ENCODE measurements at regions of chr3 and their contacts with region 1.

Region 1: GRCh38 chr3:111539351-111540331 is 2.4 kb upstream of the CD96 start:
- DNase-seq: peak; percentile 37 to 82 (median 64)
- ATAC-seq: peak; percentile 26
- H3K4me3 ChIP-seq: peak overlapping the region; percentile 37
- H3K4me3 Mint-ChIP-seq: peak overlapping the region; percentile 64
- H3K27ac ChIP-seq: peak overlapping the region in 1 of 2 donors; percentile 10
- H3K27ac Mint-ChIP-seq: no peak overlapping the region
- H3K4me1 ChIP-seq: peaks cover 31% of the 10 kb centered on the region
- H3K4me1 Mint-ChIP-seq: peaks cover 46% of the 10 kb centered on the region
- H3K27me3 ChIP-seq: no peaks in the 10 kb centered on the region
- H3K27me3 Mint-ChIP-seq: no peaks in the 10 kb centered on the region
- CTCF ChIP-seq: peak; percentile 96

Region 2: GRCh38 chr3:109731620-109732473 is 1807.8 kb before region 1 on chr3:
- CTCF ChIA-PET with region 1: no interaction called
- POLR2A ChIA-PET with region 1: no interaction called
- intact Hi-C with region 1: loop called (anchors 1 to 2 kb)
- DNase-seq: peak; percentile 0 to 78 (median 50)
- ATAC-seq: peak; percentile 88
- H3K4me3 ChIP-seq: no peak overlapping the region
- H3K4me3 Mint-ChIP-seq: no peak overlapping the region
- H3K27ac ChIP-seq: no peak overlapping the region
- H3K27ac Mint-ChIP-seq: no peak overlapping the region
- H3K4me1 ChIP-seq: peaks cover 2% of the 10 kb centered on the region
- H3K4me1 Mint-ChIP-seq: peaks cover 13% of the 10 kb centered on the region
- H3K27me3 ChIP-seq: no peaks in the 10 kb centered on the region
- H3K27me3 Mint-ChIP-seq: no peaks in the 10 kb centered on the region
- CTCF ChIP-seq: peak; percentile 90

Region 3: DNA sequence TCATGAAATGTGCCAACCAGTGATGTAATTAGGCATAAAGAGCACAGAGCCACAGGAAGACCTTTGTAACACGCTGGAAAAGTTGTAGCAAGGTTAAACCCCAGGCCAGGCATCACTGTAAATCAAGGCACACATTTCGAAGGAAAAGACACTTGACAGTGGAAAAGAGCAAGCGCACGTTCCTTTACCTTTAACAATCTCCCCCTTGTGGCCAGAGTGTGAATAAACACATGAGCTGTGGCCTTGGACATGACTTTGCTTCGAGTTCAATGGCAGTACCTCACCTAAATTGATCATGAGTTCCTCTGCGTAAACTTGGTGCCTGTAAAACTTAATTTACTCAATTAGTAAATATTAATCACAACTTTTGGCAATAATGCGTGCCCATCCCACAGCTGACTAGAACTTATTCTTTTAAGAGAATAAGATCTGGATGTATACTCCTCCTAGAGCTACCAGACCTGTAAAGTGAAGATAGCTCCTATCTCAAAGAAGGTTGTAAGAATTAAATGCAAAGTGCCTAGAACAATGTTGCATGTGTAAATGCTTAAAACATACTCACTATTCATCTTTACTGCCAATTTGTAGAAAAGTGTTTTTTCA is 1225.0 kb before region 1 on chr3:
- CTCF ChIA-PET with region 1: interaction called, 9 read pairs
- POLR2A ChIA-PET with region 1: interaction called, 3 read pairs
- intact Hi-C with region 1: loop called (anchors 5 to 10 kb)
- DNase-seq: peak; percentile 7 to 75 (median 40)
- ATAC-seq: peak; percentile 63
- H3K4me3 ChIP-seq: no peak overlapping the region
- H3K4me3 Mint-ChIP-seq: no peak overlapping the region
- H3K27ac ChIP-seq: no peak overlapping the region
- H3K27ac Mint-ChIP-seq: no peak overlapping the region
- H3K4me1 ChIP-seq: peaks cover 3% of the 10 kb centered on the region
- H3K4me1 Mint-ChIP-seq: no peaks in the 10 kb centered on the region
- H3K27me3 ChIP-seq: no peaks in the 10 kb centered on the region
- H3K27me3 Mint-ChIP-seq: no peaks in the 10 kb centered on the region
- CTCF ChIP-seq: peak; percentile 77

Region 4: DNA sequence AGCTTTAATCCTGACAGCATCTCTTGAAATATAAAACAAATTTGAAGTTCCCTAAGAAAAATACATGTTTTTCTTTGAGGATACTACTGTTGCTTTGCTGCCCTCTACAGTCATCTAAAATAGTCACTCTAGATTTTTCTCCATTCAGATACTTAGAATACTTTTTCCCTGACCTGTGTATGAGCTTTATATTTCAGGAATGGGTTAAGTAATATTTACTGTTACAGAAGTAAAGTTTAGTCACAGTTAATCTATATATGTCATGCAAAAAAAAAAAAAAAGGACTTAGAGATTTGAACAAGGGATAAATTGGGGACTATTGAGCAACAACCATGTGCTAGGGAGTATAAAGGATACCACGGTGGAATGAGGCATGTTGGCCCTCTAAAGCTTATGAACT is 459.2 kb before region 1 on chr3:
- CTCF ChIA-PET with region 1: interaction called, 4 read pairs
- POLR2A ChIA-PET with region 1: no interaction called
- intact Hi-C with region 1: loop called in 1 of 2 experiments (anchors 5 kb)
- DNase-seq: peak in 3 of 14 experiments; percentile 34 to 36 (median 35)
- ATAC-seq: no peak
- H3K4me3 ChIP-seq: no peak overlapping the region
- H3K4me3 Mint-ChIP-seq: no peak overlapping the region
- H3K27ac ChIP-seq: no peak overlapping the region
- H3K27ac Mint-ChIP-seq: no peak overlapping the region
- H3K4me1 ChIP-seq: no peaks in the 10 kb centered on the region
- H3K4me1 Mint-ChIP-seq: peaks cover under 1% of the 10 kb centered on the region
- H3K27me3 ChIP-seq: no peaks in the 10 kb centered on the region
- H3K27me3 Mint-ChIP-seq: peaks cover 15% of the 10 kb centered on the region
- CTCF ChIP-seq: peak; percentile 72

Region 5: DNA sequence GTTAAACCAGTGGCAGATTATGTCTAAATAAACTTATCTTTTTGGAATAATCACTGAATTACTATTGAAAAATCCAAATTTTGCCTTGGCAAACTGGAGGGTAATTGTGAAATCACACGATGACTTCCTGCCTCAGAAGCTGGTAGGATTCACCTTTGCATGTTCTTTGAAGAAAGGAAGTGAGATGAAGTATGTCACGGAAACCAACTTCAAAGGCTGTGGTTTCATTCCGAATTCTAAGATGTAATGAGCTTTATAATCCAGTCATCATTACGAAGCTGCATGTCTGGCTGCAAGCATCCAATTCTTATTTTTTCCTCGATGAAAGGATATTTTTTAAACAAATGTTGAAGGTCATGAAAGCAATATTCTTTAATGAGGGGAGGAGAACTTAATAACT is 70.5 kb after region 1 on chr3:
- CTCF ChIA-PET with region 1: interaction called, 3 read pairs
- POLR2A ChIA-PET with region 1: interaction called, 8 read pairs
- intact Hi-C with region 1: loop called in 1 of 2 experiments (anchors 1 kb)
- DNase-seq: peak in 6 of 14 experiments; percentile 16 to 94 (median 68)
- ATAC-seq: peak; percentile 88
- H3K4me3 ChIP-seq: no peak overlapping the region
- H3K4me3 Mint-ChIP-seq: peak overlapping the region; percentile 54
- H3K27ac ChIP-seq: peak overlapping the region; percentile 43 to 58
- H3K27ac Mint-ChIP-seq: peak overlapping the region; percentile 88
- H3K4me1 ChIP-seq: peaks cover 23% of the 10 kb centered on the region
- H3K4me1 Mint-ChIP-seq: peaks cover 64% of the 10 kb centered on the region
- H3K27me3 ChIP-seq: no peaks in the 10 kb centered on the region
- H3K27me3 Mint-ChIP-seq: no peaks in the 10 kb centered on the region
- CTCF ChIP-seq: no peak